Activated naive CD4-positive, alpha-beta T cell treated with anti-CD3 and anti-CD28 coated beads for 36 hours (primary cell): ENCODE measurements at regions of chr17 and their contacts with region 1.

Region 1: GRCh38 chr17:4215882-4216570 is 47.8 kb downstream of the ANKFY1 start:
- DNase-seq: no peak
- H3K4me3 Mint-ChIP-seq: no peak overlapping the region
- H3K27ac Mint-ChIP-seq: no peak overlapping the region
- H3K4me1 Mint-ChIP-seq: peaks cover 7% of the 10 kb centered on the region
- H3K27me3 Mint-ChIP-seq: no peaks in the 10 kb centered on the region

Region 2: DNA sequence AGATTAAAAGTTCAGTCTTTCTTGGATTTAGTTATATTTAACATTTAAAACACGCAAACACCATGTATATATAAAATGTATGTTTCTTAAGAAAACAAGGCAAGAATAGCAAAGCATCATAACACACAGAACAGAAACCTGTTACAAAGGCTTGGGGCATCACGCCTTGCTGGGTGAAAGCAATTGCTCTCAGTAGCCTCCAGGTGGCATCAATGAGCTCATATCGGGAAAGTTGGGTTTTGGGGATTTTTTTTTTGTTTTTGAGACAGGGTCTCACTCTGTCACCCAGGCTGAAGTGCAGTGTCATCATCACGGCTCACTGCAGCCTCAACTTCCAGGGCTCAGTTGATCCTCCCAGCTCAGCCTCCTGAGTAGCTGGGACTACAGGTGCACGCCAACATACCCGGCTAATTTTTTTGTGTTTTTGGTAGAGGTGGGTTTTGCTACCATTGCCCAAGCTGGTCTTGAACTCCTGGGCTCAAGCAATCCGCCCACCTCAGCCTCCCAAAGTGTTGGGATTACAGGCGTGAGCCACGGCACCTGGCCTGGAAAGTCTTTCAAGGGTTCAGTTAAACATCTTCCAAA is 16.1 kb before region 1 on chr17:
- CTCF ChIA-PET with region 1: interaction called, 10 read pairs
- intact Hi-C with region 1: no loop called
- DNase-seq: peak; percentile 62
- H3K4me3 Mint-ChIP-seq: no peak overlapping the region
- H3K27ac Mint-ChIP-seq: no peak overlapping the region
- H3K4me1 Mint-ChIP-seq: peaks cover 9% of the 10 kb centered on the region
- H3K27me3 Mint-ChIP-seq: no peaks in the 10 kb centered on the region

Region 3: GRCh38 chr17:4263282-4264215 is 47.5 kb after region 1 on chr17 and contains the start of gene ANKFY1:
- CTCF ChIA-PET with region 1: no interaction called
- intact Hi-C with region 1: loop called (anchors 5 kb)
- DNase-seq: peak; percentile 99
- H3K4me3 Mint-ChIP-seq: peak within 1 kb of the TSS; percentile 89
- H3K27ac Mint-ChIP-seq: peak within 1 kb of the TSS; percentile 83
- H3K4me1 Mint-ChIP-seq: peaks cover 34% of the 10 kb centered on the region
- H3K27me3 Mint-ChIP-seq: no peaks in the 10 kb centered on the region
- total RNA-seq, gene ANKFY1: 36.6 to 37.4 TPM

Region 4: GRCh38 chr17:4304417-4305027 is 88.5 kb after region 1 on chr17:
- CTCF ChIA-PET with region 1: interaction called, 15 read pairs
- intact Hi-C with region 1: loop called (anchors 1 kb)
- DNase-seq: peak; percentile 76
- H3K4me3 Mint-ChIP-seq: no peak overlapping the region
- H3K27ac Mint-ChIP-seq: no peak overlapping the region
- H3K4me1 Mint-ChIP-seq: peaks cover 7% of the 10 kb centered on the region
- H3K27me3 Mint-ChIP-seq: no peaks in the 10 kb centered on the region

Region 5: GRCh38 chr17:4366327-4367063 is 150.5 kb after region 1 on chr17 and contains the start of gene UBE2G1:
- CTCF ChIA-PET with region 1: no interaction called
- intact Hi-C with region 1: loop called (anchors 1 kb)
- DNase-seq: peak; percentile 99
- H3K4me3 Mint-ChIP-seq: peak within 1 kb of the TSS; percentile 71
- H3K27ac Mint-ChIP-seq: peak within 1 kb of the TSS; percentile 81
- H3K4me1 Mint-ChIP-seq: peaks cover 31% of the 10 kb centered on the region
- H3K27me3 Mint-ChIP-seq: no peaks in the 10 kb centered on the region
- total RNA-seq, gene UBE2G1: 33.3 to 36.1 TPM

Region 6: GRCh38 chr17:4412933-4413831 is 197.2 kb after region 1 on chr17:
- CTCF ChIA-PET with region 1: interaction called, 21 read pairs
- intact Hi-C with region 1: loop called (anchors 1 kb)
- DNase-seq: peak; percentile 96
- H3K4me3 Mint-ChIP-seq: peak overlapping the region; percentile 45
- H3K27ac Mint-ChIP-seq: no peak overlapping the region
- H3K4me1 Mint-ChIP-seq: peaks cover 5% of the 10 kb centered on the region
- H3K27me3 Mint-ChIP-seq: no peaks in the 10 kb centered on the region

Region 7: DNA sequence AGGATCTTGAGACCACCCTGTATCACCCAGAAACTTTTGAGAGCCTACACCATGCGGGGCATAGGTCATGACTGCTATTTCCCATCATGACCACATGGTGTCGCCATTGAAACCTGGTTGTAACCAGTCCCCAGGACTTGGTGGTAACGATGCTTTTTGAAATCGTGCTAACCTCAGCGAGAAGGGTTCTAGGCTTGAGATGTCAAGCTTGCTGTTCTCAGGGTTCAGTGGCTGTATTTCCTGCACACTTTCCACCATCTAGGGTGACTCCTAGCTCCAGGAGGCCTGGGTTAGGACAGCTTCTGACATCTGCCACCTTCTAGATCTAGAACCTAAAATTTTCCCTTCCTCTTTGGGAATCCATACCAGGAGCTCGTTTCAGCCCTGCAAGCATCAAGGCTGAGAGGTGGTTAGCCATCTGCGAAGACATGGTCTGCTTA is 204.7 kb after region 1 on chr17:
- CTCF ChIA-PET with region 1: interaction called, 21 read pairs
- intact Hi-C with region 1: no loop called
- DNase-seq: peak; percentile 78
- H3K4me3 Mint-ChIP-seq: no peak overlapping the region
- H3K27ac Mint-ChIP-seq: no peak overlapping the region
- H3K4me1 Mint-ChIP-seq: peaks cover 3% of the 10 kb centered on the region
- H3K27me3 Mint-ChIP-seq: no peaks in the 10 kb centered on the region